ENCODE measurements at regions of chr1 and their contacts with region 1.

Region 1: GRCh38 chr1:84442256-84442655 is 36.8 kb upstream of the RPF1 start:
- DNase-seq: peak; percentile 22
- H3K4me3 Mint-ChIP-seq: no peak overlapping the region
- H3K27ac Mint-ChIP-seq: no peak overlapping the region
- H3K4me1 Mint-ChIP-seq: no peaks in the 10 kb centered on the region
- H3K27me3 Mint-ChIP-seq: no peaks in the 10 kb centered on the region
- CTCF ChIP-seq: no peak

Region 2: DNA sequence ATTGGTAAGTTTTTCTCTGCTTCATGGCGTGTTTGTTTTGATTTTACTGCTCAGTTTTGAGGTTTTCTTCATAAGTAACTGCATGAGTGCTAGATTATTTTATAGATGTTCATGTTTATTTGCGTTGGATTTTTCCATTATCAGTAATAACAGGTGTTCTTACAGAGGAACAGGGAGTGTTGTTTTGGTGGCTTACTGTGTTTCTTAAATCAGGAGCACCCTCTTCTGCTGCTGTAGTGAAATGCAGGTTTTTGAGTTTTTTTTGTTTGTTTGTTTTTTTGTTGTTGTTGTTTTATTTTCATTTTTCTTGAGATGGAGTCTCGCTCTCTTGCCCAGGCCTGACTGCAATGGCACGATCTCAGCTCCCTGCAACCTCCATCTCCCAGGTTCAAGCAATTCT is 99.4 kb after region 1 on chr1:
- CTCF ChIA-PET with region 1: no interaction called
- intact Hi-C with region 1: loop called (anchors 1 kb)
- DNase-seq: no peak
- H3K4me3 Mint-ChIP-seq: no peak overlapping the region
- H3K27ac Mint-ChIP-seq: no peak overlapping the region
- H3K4me1 Mint-ChIP-seq: no peaks in the 10 kb centered on the region
- H3K27me3 Mint-ChIP-seq: no peaks in the 10 kb centered on the region
- CTCF ChIP-seq: no peak

Region 3: GRCh38 chr1:84603941-84604830 is 161.9 kb after region 1 on chr1:
- CTCF ChIA-PET with region 1: interaction called, 10 read pairs
- intact Hi-C with region 1: loop called (anchors 5 kb)
- DNase-seq: peak; percentile 38
- H3K4me3 Mint-ChIP-seq: peak overlapping the region; percentile 60
- H3K27ac Mint-ChIP-seq: peak overlapping the region; percentile 30
- H3K4me1 Mint-ChIP-seq: peaks cover 26% of the 10 kb centered on the region
- H3K27me3 Mint-ChIP-seq: no peaks in the 10 kb centered on the region
- CTCF ChIP-seq: no peak

Region 4: GRCh38 chr1:84620720-84621313 is 178.6 kb after region 1 on chr1:
- CTCF ChIA-PET with region 1: interaction called, 11 read pairs
- intact Hi-C with region 1: loop called (anchors 2 kb)
- DNase-seq: peak; percentile 90
- H3K4me3 Mint-ChIP-seq: peak overlapping the region; percentile 75
- H3K27ac Mint-ChIP-seq: peak overlapping the region; percentile 32
- H3K4me1 Mint-ChIP-seq: peaks cover 14% of the 10 kb centered on the region
- H3K27me3 Mint-ChIP-seq: no peaks in the 10 kb centered on the region
- CTCF ChIP-seq: peak; percentile 97

Region 5: GRCh38 chr1:84753516-84754385 is 311.5 kb after region 1 on chr1:
- CTCF ChIA-PET with region 1: interaction called, 3 read pairs
- intact Hi-C with region 1: loop called (anchors 1 kb)
- DNase-seq: peak; percentile 76
- H3K4me3 Mint-ChIP-seq: no peak overlapping the region
- H3K27ac Mint-ChIP-seq: peak overlapping the region; percentile 47
- H3K4me1 Mint-ChIP-seq: peaks cover 29% of the 10 kb centered on the region
- H3K27me3 Mint-ChIP-seq: no peaks in the 10 kb centered on the region
- CTCF ChIP-seq: peak; percentile 95

Region 6: DNA sequence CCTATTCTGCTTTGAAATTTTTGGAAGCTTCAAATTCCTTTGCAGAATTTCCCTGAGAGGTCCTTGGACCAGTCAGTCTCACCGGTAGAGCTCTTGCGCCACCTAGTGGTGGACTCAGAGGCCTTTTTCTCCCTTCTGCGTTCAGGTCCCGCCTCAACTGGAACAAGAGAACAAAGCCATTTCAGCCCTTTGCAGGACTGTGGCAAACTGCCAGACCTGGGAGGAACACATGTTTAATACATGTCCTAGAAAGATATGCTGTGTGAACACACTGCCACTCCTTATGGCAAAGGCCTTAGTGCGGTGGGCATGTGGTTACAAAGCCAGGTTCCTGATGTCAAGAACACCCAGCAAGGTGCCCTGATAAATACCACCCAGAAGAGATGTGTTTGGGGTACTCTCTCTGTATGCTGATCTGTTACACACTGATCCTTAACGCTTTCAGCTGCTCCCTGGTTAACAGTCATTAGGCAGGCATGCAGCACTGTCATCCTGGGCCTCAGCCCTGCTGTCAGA is 330.2 kb after region 1 on chr1:
- CTCF ChIA-PET with region 1: interaction called, 4 read pairs
- intact Hi-C with region 1: loop called (anchors 5 kb)
- DNase-seq: peak; percentile 89
- H3K4me3 Mint-ChIP-seq: no peak overlapping the region
- H3K27ac Mint-ChIP-seq: no peak overlapping the region
- H3K4me1 Mint-ChIP-seq: peaks cover 8% of the 10 kb centered on the region
- H3K27me3 Mint-ChIP-seq: peaks cover 30% of the 10 kb centered on the region
- CTCF ChIP-seq: peak; percentile 86

Region 7: GRCh38 chr1:84936116-84936810 is 494.0 kb after region 1 on chr1:
- CTCF ChIA-PET with region 1: no interaction called
- intact Hi-C with region 1: loop called (anchors 1 kb)
- DNase-seq: peak; percentile 25
- H3K4me3 Mint-ChIP-seq: no peak overlapping the region
- H3K27ac Mint-ChIP-seq: no peak overlapping the region
- H3K4me1 Mint-ChIP-seq: no peaks in the 10 kb centered on the region
- H3K27me3 Mint-ChIP-seq: no peaks in the 10 kb centered on the region
- CTCF ChIP-seq: peak; percentile 85

Measured in Calu3 (cell line).